Activated CD8-positive, alpha-beta T cell treated with anti-CD3 and anti-CD28 coated beads for 36 hours (primary cell): ENCODE measurements at regions of chr4 and their contacts with region 1.

Region 1: DNA sequence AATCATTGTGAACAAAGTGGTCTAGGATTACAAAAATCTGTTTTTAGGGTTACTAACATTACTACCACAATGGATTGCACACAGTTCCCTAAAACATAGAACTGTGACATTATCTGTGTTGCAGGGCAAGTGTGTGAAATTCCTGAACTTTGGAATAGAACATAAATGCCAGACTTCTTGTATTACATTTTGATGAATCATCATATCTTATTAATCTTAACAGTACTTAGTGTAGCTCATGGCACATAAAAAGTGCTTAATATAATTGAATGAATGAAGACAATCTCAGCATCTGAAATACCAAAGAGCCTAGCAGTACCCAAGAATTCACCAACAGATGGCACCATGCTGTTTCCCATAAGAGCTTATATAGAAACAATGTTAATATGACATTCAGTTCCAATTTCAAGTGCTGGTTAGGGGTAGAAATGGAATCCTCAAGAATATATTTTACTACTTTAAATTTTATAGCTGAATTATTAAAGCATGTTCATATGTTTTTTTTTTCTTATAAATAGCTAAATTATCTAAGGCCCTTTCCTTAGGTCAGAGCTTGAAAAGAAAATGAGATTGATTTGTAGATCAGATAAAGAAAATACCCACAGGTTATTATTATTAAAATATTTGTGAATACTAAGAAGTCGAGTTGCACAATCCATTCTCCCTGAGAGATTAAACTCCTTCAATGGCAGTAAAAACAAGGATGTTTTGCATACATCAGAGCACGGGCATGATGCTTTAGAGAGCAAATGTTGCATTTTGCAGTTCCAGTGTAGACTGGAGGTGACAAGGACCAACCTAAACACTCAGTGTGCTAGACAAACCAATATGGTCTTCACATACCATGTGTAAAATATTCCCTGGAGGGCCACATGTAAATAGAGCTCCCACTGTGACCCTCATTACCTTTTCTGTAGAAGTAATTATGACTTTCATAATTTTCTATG is 25.7 kb upstream of the SHISA3 start:
- DNase-seq: peak; percentile 33
- ATAC-seq: no peak
- H3K4me3 Mint-ChIP-seq: no peak overlapping the region
- H3K27ac Mint-ChIP-seq: no peak overlapping the region
- H3K4me1 Mint-ChIP-seq: no peaks in the 10 kb centered on the region
- H3K27me3 Mint-ChIP-seq: peaks cover 3% of the 10 kb centered on the region
- CTCF ChIP-seq: peak; percentile 44

Region 2: DNA sequence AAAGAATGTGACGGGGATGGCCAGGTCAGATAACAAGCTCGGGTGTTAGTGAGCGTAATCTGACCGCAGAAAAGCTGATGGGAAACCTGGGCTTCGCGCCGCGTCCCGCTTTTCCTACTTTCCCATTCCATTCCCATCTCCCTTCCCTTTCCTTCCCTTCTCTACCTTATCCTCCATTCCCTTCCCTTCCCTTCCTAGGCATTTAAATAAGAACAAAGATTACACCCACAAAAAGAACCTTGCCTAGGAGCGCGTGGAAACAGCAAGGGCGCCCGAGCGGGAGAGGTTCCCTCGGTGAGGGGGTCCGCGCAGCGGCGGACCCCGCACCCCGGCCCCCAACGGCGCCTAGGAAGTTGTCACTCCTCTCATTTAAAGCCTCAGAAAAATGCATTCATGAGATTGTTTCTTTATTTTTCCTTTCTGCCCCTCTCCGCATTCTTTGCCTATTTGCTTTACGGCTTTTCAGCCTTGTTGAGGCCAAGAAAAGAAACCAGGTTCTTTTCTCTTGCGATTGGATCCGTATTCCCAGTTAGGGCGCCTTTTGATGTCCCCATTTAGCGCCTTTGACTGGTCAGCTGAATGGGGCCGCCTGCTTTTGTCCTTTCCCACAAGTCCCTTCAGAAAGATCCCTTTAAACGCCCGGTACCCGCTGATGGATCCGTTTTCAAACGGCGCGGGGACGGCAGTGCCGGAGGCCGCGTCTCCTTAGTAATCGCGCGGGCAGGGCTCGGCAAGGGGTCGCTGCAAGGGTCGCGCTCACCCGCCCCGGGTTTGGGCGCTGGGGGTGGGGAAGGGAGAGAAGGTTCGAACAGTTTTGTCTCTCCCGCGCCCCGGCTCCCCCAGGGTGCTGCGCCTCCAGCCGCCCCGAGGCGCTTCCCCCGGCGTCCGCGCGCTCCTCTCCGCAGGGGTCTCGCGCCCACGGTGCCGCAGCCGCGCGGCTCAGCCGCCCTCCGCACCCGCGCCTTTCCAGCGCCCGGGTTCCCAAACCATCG is 490.4 kb before region 1 on chr4:
- CTCF ChIA-PET with region 1: no interaction called
- POLR2A ChIA-PET with region 1: no interaction called
- intact Hi-C with region 1: no loop called
- DNase-seq: no peak
- ATAC-seq: no peak
- H3K4me3 Mint-ChIP-seq: peak overlapping the region; percentile 53
- H3K27ac Mint-ChIP-seq: no peak overlapping the region
- H3K4me1 Mint-ChIP-seq: peaks cover 12% of the 10 kb centered on the region
- H3K27me3 Mint-ChIP-seq: peaks cover 53% of the 10 kb centered on the region
- CTCF ChIP-seq: no peak

Region 3: GRCh38 chr4:42282081-42282901 is 89.3 kb before region 1 on chr4:
- CTCF ChIA-PET with region 1: interaction called, 12 read pairs
- POLR2A ChIA-PET with region 1: no interaction called
- intact Hi-C with region 1: no loop called
- DNase-seq: peak; percentile 52
- ATAC-seq: peak; percentile 68
- H3K4me3 Mint-ChIP-seq: no peak overlapping the region
- H3K27ac Mint-ChIP-seq: no peak overlapping the region
- H3K4me1 Mint-ChIP-seq: peaks cover 8% of the 10 kb centered on the region
- H3K27me3 Mint-ChIP-seq: peaks cover 22% of the 10 kb centered on the region
- CTCF ChIP-seq: peak; percentile 68

Region 4: GRCh38 chr4:42331914-42332368 is 39.6 kb before region 1 on chr4:
- CTCF ChIA-PET with region 1: no interaction called
- POLR2A ChIA-PET with region 1: no interaction called
- intact Hi-C with region 1: no loop called
- DNase-seq: no peak
- ATAC-seq: no peak
- H3K4me3 Mint-ChIP-seq: no peak overlapping the region
- H3K27ac Mint-ChIP-seq: no peak overlapping the region
- H3K4me1 Mint-ChIP-seq: no peaks in the 10 kb centered on the region
- H3K27me3 Mint-ChIP-seq: peaks cover 4% of the 10 kb centered on the region
- CTCF ChIP-seq: no peak

Region 5: DNA sequence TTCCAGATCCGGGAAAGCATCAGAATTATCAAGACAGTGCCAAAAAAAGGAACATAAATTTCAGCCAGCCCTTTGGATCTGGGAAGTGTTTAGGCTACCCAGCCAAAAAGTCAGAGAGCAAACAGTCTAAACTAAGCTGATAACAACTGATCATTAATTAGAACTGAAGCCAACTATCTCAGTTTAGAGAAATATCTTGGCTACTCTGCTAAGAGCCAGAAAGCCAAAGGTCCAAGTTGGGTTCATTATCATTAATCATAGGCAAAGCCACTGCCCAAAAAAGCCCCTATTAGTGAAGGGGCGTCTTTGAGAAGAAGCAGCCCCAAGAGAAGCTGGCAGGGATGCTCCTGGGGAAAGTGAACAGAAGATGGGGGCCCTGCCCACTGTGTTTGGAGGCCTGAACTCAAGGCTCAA is 11.3 kb before region 1 on chr4:
- CTCF ChIA-PET with region 1: no interaction called
- POLR2A ChIA-PET with region 1: no interaction called
- intact Hi-C with region 1: no loop called
- DNase-seq: no peak
- ATAC-seq: no peak
- H3K4me3 Mint-ChIP-seq: no peak overlapping the region
- H3K27ac Mint-ChIP-seq: no peak overlapping the region
- H3K4me1 Mint-ChIP-seq: peaks cover 2% of the 10 kb centered on the region
- H3K27me3 Mint-ChIP-seq: peaks cover 26% of the 10 kb centered on the region
- CTCF ChIP-seq: no peak

Region 6: GRCh38 chr4:42391981-42392380 is 20.4 kb after region 1 on chr4:
- CTCF ChIA-PET with region 1: no interaction called
- POLR2A ChIA-PET with region 1: no interaction called
- intact Hi-C with region 1: no loop called
- DNase-seq: no peak
- ATAC-seq: no peak
- H3K4me3 Mint-ChIP-seq: no peak overlapping the region
- H3K27ac Mint-ChIP-seq: no peak overlapping the region
- H3K4me1 Mint-ChIP-seq: peaks cover 8% of the 10 kb centered on the region
- H3K27me3 Mint-ChIP-seq: peaks cover 19% of the 10 kb centered on the region
- CTCF ChIP-seq: no peak

Region 7: DNA sequence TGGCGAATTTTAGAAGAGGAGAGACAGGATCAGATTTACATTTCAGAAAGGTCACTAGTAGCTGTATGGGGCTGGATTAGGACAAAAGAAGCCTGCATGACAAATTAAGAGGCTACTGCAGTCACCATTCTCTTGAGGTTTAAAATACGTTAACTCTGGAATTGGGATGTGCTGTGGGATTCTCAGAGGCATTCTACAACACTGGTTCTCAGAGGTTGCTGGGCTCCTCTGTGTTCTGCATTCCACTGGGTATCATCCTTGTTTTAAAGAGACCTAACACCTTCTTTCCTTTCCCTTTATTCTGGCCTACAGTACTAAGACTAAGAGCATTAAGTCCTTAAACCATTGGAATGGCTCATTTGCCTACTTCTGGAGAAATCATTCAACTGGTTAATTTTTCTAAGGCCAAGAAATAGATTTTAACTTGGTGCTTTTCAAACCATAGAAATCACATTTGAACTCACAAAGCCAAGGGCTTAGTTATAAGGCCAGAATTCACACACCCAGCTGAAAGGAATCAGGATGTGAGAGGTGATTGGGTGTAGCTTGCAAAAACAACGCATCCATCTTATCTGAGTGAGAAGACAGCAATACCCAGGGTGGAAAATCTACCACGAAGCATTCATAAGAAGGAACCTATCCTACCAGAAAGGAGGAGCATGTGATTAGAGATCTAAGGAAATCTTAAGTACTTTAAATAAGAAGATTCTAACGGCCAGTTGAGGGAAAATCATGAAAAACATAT is 142.3 kb after region 1 on chr4:
- CTCF ChIA-PET with region 1: interaction called, 43 read pairs
- POLR2A ChIA-PET with region 1: no interaction called
- intact Hi-C with region 1: no loop called
- DNase-seq: no peak
- ATAC-seq: no peak
- H3K4me3 Mint-ChIP-seq: no peak overlapping the region
- H3K27ac Mint-ChIP-seq: no peak overlapping the region
- H3K4me1 Mint-ChIP-seq: peaks cover 8% of the 10 kb centered on the region
- H3K27me3 Mint-ChIP-seq: no peaks in the 10 kb centered on the region
- CTCF ChIP-seq: no peak

Region 8: GRCh38 chr4:42519803-42520417 is 148.3 kb after region 1 on chr4:
- CTCF ChIA-PET with region 1: interaction called, 43 read pairs
- POLR2A ChIA-PET with region 1: no interaction called
- intact Hi-C with region 1: loop called (anchors 5 kb)
- DNase-seq: peak; percentile 68
- ATAC-seq: peak; percentile 70
- H3K4me3 Mint-ChIP-seq: no peak overlapping the region
- H3K27ac Mint-ChIP-seq: no peak overlapping the region
- H3K4me1 Mint-ChIP-seq: peaks cover 8% of the 10 kb centered on the region
- H3K27me3 Mint-ChIP-seq: no peaks in the 10 kb centered on the region
- CTCF ChIP-seq: peak; percentile 78